ENCODE measurements at regions of chr14 and their contacts with region 1.

Region 1: GRCh38 chr14:21014761-21015190 is 10.1 kb downstream of the NDRG2 start:
- DNase-seq: no peak
- H3K4me3 ChIP-seq: no peak overlapping the region
- H3K27ac ChIP-seq: no peak overlapping the region
- H3K4me1 ChIP-seq: peaks cover 0 to 26% (median 0%) of the 10 kb centered on the region in 3 donors
- H3K27me3 ChIP-seq: no peaks in the 10 kb centered on the region
- CTCF ChIP-seq: peak; percentile 70 to 95 (median 92)
- POLR2A ChIP-seq: no peak

Region 2: GRCh38 chr14:21092273-21093011 is 77.7 kb after region 1 on chr14:
- intact Hi-C with region 1: loop called (anchors 10 kb)
- DNase-seq: no peak
- H3K4me3 ChIP-seq: no peak overlapping the region
- H3K27ac ChIP-seq: peak overlapping the region in 2 of 4 donors; percentile 5 to 11
- H3K4me1 ChIP-seq: peaks cover 7 to 69% (median 29%) of the 10 kb centered on the region in 3 donors
- H3K27me3 ChIP-seq: no peaks in the 10 kb centered on the region
- CTCF ChIP-seq: peak; percentile 100
- POLR2A ChIP-seq: no peak